Head of caudate nucleus (tissue), 42 donors: ENCODE measurements at regions of chr6 and their contacts with region 1.

Region 1: GRCh38 chr6:29016559-29017427 is 11.7 kb upstream of the ZNF311 start:
- DNase-seq: peak; percentile 40 to 93 (median 82)

Region 2: GRCh38 chr6:28683944-28684538 is 332.8 kb before region 1 on chr6:
- intact Hi-C with region 1: loop called (anchors 5 kb)
- DNase-seq: peak in 5 of 42 donors; percentile 12 to 40 (median 15)

Region 3: GRCh38 chr6:28710466-28711191 is 306.2 kb before region 1 on chr6:
- intact Hi-C with region 1: no loop called
- DNase-seq: no peak

Region 4: DNA sequence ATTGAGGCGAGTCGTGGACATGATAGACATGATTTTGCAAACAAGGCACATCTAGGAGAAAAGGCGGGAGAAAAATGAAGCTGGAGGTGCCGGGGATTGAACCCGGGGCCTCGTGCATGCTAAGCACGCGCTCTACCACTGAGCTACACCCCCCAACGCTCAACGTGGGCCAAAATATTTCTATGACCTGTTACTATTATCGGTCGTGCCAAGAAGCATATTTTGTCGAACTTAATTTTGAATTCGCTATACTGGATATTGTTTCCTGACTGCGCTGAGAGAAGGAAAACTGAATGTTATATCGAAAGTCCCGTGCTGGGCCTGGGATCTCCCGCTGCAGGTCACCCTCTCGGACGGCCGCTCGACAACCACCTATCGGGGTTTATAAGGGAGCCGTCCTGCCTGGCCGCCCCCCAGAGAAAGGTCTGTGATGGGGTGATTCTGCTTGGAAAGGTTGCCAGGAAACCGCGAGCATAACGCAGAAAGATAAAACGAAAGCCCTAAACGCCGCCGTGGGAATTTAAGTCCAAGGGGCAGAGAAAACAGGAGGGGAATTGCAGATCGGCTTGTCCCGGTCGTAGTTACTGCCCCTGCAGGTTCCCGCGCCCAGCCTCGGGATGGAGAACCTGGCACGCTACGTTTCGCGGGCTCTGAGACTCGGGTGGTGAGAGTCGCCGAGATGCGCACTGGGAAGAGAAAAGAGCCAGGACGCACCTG is 153.0 kb before region 1 on chr6:
- intact Hi-C with region 1: loop called (anchors 10 kb)
- DNase-seq: peak; percentile 59 to 93 (median 84)

Region 5: GRCh38 chr6:29071831-29072723 is 55.3 kb after region 1 on chr6:
- intact Hi-C with region 1: no loop called
- DNase-seq: no peak